ENCODE measurements at regions of chr1 and their contacts with region 1.

Region 1: GRCh38 chr1:11037740-11038182 is 9.3 kb downstream of the MASP2 start:
- DNase-seq: peak; percentile 80 to 92 (median 86)
- ATAC-seq: peak; percentile 88 to 97 (median 94)
- H3K4me3 ChIP-seq: peak overlapping the region in 1 of 12 donors; percentile 27
- H3K27ac ChIP-seq: no peak overlapping the region
- H3K4me1 ChIP-seq: peaks cover 0 to 9% (median 6%) of the 10 kb centered on the region in 12 donors
- H3K27me3 ChIP-seq: no peaks in the 10 kb centered on the region
- CTCF ChIP-seq: peak; percentile 87 to 99 (median 97)
- POLR2A ChIP-seq: no peak

Region 2: DNA sequence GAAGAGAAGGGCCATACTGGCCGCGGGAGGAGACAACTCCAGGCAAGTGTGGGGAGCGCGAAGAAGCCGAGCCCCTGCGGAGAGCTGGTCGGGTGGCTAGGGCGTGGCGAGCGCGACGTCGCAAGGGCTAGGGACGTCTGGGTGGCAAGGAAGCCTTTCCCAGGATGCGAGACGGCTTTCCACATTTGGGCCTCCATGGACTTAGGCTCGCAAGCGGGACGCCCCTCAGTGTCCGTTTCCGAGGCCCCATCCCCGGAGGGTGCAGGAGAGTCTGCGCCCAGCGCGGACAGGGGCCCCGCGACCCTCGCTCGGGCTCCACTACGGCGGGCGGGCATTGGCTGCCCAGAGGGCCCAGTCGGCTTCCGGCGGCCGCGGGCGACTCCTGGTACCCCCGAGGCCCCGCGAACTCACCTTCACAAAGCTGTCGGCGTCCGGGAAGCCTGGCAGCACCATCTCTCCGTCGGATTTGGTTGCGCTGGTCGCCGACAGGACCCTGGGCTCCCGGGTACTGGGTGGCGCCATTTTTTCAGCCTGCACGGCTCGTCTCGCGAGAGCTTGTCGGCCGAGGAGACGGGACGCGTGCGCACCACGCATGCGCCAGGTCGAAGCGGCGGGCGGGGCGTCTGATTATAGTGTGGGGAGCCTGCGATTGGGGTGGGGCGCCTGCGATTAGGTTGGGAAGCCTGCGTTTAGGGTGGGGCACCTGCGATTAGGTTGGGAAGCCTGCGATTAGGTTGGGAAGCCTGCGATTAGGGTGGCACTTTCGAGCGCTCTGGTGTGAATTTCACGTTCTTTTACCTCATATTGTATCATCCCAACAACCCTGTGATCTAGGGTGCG is 61.8 kb after region 1 on chr1 and contains the start of gene EXOSC10:
- intact Hi-C with region 1: no loop called
- DNase-seq: peak; percentile 93 to 98 (median 95)
- ATAC-seq: peak; percentile 94 to 99 (median 98)
- H3K4me3 ChIP-seq: peak within 1 kb of the TSS; percentile 70 to 100 (median 87)
- H3K27ac ChIP-seq: peak within 1 kb of the TSS; percentile 37 to 93 (median 83)
- H3K4me1 ChIP-seq: peaks cover 0 to 21% (median 13%) of the 10 kb centered on the region in 12 donors
- H3K27me3 ChIP-seq: no peaks in the 10 kb centered on the region
- CTCF ChIP-seq: peak in 1 of 12 donors; percentile 23
- POLR2A ChIP-seq: peak in 1 of 2 donors; percentile 63
- total RNA-seq, gene EXOSC10: 19.4 to 34.8 (median 22.5) TPM

Region 3: GRCh38 chr1:11237356-11237755 is 199.6 kb after region 1 on chr1:
- intact Hi-C with region 1: loop called in 2 of 10 experiments (anchors 10 kb)
- DNase-seq: no peak
- ATAC-seq: peak in 2 of 4 donors; percentile 61 to 69
- H3K4me3 ChIP-seq: no peak overlapping the region
- H3K27ac ChIP-seq: peak overlapping the region in 6 of 12 donors; percentile 6 to 53 (median 21)
- H3K4me1 ChIP-seq: peaks cover 0 to 13% (median 3%) of the 10 kb centered on the region in 12 donors
- H3K27me3 ChIP-seq: no peaks in the 10 kb centered on the region
- CTCF ChIP-seq: no peak
- POLR2A ChIP-seq: no peak

Region 4: DNA sequence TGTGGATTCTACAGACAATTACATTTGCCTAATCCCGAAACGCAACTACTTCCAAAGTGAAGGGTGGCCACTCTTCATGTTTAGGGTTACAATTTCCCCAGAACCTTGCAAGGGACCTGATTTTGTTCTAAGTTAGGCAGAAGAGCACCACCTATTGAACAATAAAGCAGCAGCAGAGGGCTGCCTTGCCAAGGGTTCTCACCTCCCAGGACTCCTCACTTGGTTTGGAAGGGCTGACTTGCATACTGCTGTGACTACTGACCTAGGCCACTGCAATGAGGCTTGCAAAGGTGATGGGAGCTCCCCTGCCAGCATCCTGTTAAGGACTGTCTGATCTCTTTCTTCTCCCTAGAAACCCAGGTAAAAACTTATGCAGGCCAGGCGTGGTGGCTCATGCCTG is 210.4 kb after region 1 on chr1:
- intact Hi-C with region 1: loop called in 1 of 10 experiments (anchors 10 kb)
- DNase-seq: no peak
- ATAC-seq: no peak
- H3K4me3 ChIP-seq: no peak overlapping the region
- H3K27ac ChIP-seq: no peak overlapping the region
- H3K4me1 ChIP-seq: no peaks in the 10 kb centered on the region
- H3K27me3 ChIP-seq: no peaks in the 10 kb centered on the region
- CTCF ChIP-seq: no peak
- POLR2A ChIP-seq: no peak

Region 5: DNA sequence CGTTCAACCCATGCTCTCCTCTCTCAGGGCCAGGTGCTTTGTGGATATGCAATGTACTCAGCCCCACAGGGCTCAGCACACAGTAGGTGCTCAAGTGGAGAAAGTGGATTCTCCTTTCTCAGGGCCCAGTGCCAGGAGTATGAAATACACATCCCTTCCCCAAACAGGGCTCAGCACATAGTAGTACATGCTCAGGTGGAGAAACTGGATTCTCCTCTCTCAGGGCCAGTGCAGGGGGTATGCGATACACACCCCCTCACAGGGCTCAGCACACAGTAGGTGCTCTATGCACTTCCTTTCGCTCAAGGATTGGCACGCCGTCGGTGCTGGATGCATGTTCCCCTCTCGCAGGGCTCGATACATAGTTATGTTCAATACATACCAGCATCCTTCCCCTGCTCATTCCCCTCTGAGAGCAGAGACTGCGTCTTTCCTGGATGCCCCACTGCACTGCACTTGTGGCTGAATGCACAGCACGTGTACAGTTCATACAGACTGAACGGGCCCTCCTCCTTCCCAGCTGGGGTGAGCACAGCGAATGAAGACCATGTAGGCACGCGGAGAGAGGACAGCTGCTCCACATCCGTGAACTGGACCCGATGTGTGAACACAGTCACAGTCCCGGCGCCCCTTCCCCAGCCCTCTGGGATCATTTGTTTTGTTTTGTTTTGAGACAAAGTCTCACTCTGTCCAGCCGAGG is 424.6 kb after region 1 on chr1:
- intact Hi-C with region 1: no loop called
- DNase-seq: no peak
- ATAC-seq: no peak
- H3K4me3 ChIP-seq: no peak overlapping the region
- H3K27ac ChIP-seq: no peak overlapping the region
- H3K4me1 ChIP-seq: peaks cover 0 to 9% (median 0%) of the 10 kb centered on the region in 12 donors
- H3K27me3 ChIP-seq: peaks cover 0 to 36% (median 13%) of the 10 kb centered on the region in 9 donors
- CTCF ChIP-seq: no peak
- POLR2A ChIP-seq: no peak

Region 6: DNA sequence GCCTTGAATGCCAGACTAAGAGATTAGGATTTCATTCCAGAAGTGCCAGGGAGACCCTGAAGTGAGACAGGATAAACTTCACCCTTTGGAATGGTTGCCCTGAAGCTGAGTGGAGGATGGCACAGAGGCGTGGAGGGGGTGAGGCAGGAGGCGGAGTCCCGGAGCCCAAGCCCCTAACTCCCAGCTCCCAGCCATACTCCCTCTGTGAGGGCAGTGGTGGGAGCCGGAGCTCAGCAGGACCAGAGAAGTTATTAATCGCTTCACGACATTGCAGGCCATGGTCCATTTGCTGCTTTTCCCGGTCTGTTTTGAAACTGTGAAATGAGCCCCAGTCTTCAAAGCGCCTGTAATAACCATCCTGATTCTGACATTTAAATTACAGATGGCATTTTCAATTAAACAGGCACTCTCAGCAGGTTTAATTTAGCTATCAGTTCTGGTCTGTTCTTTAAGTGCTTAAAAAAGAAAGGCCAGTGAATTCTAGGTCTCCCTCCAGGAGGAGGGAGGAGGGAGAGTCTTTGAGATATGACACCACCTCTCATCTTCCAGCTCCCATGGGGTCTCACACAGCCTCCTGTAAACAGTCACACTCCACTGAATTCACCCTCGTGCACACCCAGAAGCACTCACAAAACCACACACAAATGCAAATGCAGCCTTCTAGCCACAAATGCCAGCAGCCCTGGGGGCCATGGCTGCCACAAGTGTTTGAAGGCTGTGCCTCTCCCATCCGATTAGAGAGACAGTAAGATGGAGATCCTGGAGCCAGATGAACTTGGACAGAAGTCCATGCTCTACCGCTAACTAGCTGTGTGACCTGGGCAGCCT is 596.8 kb after region 1 on chr1:
- intact Hi-C with region 1: loop called in 1 of 10 experiments (anchors 2 kb)
- DNase-seq: no peak
- ATAC-seq: no peak
- H3K4me3 ChIP-seq: no peak overlapping the region
- H3K27ac ChIP-seq: no peak overlapping the region
- H3K4me1 ChIP-seq: no peaks in the 10 kb centered on the region
- H3K27me3 ChIP-seq: peaks cover 0 to 55% (median 4%) of the 10 kb centered on the region in 9 donors
- CTCF ChIP-seq: no peak
- POLR2A ChIP-seq: no peak

Region 7: DNA sequence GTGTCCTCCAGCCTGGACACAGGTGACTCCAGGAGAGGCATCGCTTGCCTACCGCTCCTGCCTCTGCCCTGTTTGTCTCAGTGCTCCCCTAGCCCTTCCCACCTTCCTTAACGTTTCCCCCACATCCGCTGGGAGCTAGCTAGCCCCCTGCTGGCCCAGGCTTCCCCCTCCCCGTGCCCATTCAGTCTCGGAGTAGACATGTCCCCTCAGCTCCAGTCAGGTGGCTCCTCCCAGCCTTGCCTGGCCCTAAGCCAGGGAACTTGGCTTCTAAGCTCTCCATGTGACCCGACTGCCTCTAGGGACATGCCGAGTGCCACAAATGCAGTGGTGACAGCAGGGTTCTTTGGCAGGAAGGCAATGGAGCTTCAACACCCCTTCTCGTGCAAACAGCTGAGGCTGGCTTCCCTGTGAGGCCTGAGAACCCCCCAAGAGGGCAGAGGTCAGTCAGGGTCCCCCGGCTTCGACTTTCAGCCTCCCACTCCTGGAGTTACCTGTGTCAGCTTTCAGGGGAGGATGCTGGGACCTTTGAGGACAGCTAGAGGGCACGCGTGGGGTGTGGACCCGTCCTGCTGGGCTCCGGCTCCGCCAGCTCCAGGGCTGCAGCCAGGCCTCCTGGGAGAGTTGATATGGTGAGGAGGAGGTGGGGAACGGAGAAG is 670.0 kb after region 1 on chr1:
- intact Hi-C with region 1: loop called in 1 of 10 experiments (anchors 5 kb)
- DNase-seq: peak in 4 of 5 donors; percentile 75 to 89 (median 83)
- ATAC-seq: peak; percentile 80 to 94 (median 88)
- H3K4me3 ChIP-seq: no peak overlapping the region
- H3K27ac ChIP-seq: peak overlapping the region in 6 of 12 donors; percentile 3 to 71 (median 51)
- H3K4me1 ChIP-seq: peaks cover 0 to 13% (median 9%) of the 10 kb centered on the region in 12 donors
- H3K27me3 ChIP-seq: peaks cover 0 to 23% (median 0%) of the 10 kb centered on the region in 9 donors
- CTCF ChIP-seq: no peak
- POLR2A ChIP-seq: no peak

Measured in heart left ventricle (tissue), 16 donors.